ENCODE measurements at regions of chr2 and their contacts with region 1.

Region 1: DNA sequence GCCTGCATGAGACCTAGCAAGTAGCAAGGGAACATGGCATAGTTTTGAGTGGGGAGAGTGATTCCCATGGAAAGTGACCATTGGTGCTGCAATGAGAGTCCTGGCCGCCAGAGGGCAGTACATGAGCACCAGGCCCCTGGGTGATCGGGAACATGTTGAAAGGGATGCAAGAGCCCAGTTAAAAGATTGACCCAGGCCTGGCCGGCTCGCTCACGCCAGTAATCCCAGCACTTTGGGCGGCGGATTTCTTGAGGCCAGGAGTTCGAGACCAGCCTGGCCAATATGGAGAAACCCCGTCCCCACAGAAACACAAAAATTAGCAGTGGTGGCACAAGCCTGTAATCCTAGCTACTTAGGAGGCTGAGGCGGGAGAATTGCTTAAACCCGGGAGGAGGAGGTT is 22.2 kb downstream of the FAP start:
- DNase-seq: peak; percentile 88
- H3K4me3 Mint-ChIP-seq: no peak overlapping the region
- H3K27ac Mint-ChIP-seq: no peak overlapping the region
- H3K4me1 Mint-ChIP-seq: no peaks in the 10 kb centered on the region
- H3K27me3 Mint-ChIP-seq: peaks cover 57% of the 10 kb centered on the region

Region 2: GRCh38 chr2:162153608-162154224 is 67.3 kb before region 1 on chr2:
- intact Hi-C with region 1: loop called (anchors 5 kb)
- DNase-seq: peak; percentile 89
- H3K4me3 Mint-ChIP-seq: peak overlapping the region; percentile 9
- H3K27ac Mint-ChIP-seq: no peak overlapping the region
- H3K4me1 Mint-ChIP-seq: peaks cover 4% of the 10 kb centered on the region
- H3K27me3 Mint-ChIP-seq: peaks cover 50% of the 10 kb centered on the region

Measured in activated CD4-positive, alpha-beta T cell treated with anti-CD3 and anti-CD28 coated beads, Interleukin-2, amount 10 ng/mL, durations not matched to agents 24 days and 14 days (primary cell).